ENCODE measurements at regions of chr1 and their contacts with region 1.

Region 1: GRCh38 chr1:233790662-233791375 is 113.7 kb upstream of the SLC35F3 start:
- DNase-seq: peak; percentile 30
- ATAC-seq: peak; percentile 98
- H3K4me3 ChIP-seq: no peak overlapping the region
- H3K27ac ChIP-seq: no peak overlapping the region
- H3K4me1 ChIP-seq: no peaks in the 10 kb centered on the region
- H3K27me3 ChIP-seq: no peaks in the 10 kb centered on the region
- CTCF ChIP-seq: peak; percentile 94 to 97 (median 94); a peak in 5 of 6 replicates
- EP300 ChIP-seq: no peak
- POLR2A ChIP-seq: no peak
- RAD21 ChIP-seq: peak; percentile 97

Region 2: DNA sequence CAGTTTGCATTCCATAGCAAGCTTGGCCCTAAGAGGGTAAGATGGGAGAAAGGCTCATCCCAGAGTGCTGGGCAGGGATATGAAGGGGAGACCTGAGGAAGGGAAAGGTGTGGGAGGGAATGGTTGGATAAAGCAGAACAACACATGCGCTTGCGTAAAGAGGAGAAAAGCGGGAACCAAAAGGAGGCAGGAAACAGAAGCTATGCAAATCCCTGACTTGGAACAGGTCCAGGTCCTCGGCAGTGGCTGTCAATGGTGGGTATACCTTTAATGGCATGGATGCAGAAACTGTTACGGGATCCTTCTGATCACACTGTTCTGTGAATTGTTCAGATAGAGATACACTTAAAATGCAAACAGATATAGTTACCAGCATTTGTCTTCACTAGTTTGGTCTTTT is 1616.5 kb before region 1 on chr1:
- CTCF ChIA-PET with region 1: no interaction called
- POLR2A ChIA-PET with region 1: no interaction called
- RAD21 ChIA-PET with region 1: no interaction called
- SMC1A ChIA-PET with region 1: no interaction called
- in situ Hi-C with region 1: no loop called
- intact Hi-C with region 1: no loop called
- DNase-seq: no peak
- ATAC-seq: no peak
- H3K4me3 ChIP-seq: no peak overlapping the region
- H3K27ac ChIP-seq: no peak overlapping the region
- H3K4me1 ChIP-seq: no peaks in the 10 kb centered on the region
- H3K27me3 ChIP-seq: no peaks in the 10 kb centered on the region
- CTCF ChIP-seq: no peak
- EP300 ChIP-seq: no peak
- POLR2A ChIP-seq: no peak
- RAD21 ChIP-seq: no peak

Region 3: DNA sequence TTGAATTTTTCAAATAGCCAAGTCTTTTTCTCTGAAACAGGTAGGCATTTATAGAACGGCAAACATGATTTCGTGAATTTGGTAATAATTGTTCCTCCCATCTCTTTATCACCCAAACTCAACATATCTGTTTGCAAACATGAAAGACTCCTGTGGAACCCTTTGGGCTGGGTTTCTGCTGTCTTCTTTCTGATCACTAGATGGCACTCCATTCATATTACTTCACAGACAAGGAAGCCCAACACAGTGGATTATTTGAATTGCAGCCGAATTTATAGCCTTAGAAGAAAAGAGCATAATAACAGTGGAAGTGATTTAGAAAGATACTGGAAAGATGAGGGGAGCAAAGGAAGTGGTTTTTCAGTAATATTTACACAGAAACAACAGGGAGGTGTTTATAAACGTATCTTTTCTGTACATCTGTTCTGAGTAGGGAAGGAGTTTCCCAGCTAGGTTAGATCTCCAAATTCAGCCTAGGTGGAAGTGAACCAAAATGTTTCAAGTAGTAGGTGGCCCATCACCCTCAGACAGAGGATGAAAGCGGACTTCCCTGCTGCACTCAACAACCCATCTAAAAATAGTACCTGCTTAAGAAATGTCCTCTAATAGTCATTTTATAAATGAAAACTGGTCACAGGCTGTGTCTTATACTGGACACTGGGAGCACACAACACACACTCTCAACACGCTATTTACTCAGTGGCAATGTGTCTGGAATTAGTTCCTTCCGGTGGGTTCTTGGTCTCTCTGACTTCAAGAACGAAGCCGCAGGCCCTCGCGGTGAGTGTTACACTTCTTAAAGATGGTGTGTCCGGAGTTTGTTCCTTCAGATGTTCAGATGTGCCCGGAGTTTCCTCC is 395.7 kb before region 1 on chr1:
- CTCF ChIA-PET with region 1: interaction called, 3 read pairs
- POLR2A ChIA-PET with region 1: no interaction called
- RAD21 ChIA-PET with region 1: no interaction called
- SMC1A ChIA-PET with region 1: interaction called, 3 read pairs
- in situ Hi-C with region 1: no loop called
- intact Hi-C with region 1: loop called (anchors 1 kb)
- DNase-seq: no peak
- ATAC-seq: peak; percentile 96
- H3K4me3 ChIP-seq: no peak overlapping the region
- H3K27ac ChIP-seq: no peak overlapping the region
- H3K4me1 ChIP-seq: no peaks in the 10 kb centered on the region
- H3K27me3 ChIP-seq: no peaks in the 10 kb centered on the region; a peak in 1 of 4 replicates
- CTCF ChIP-seq: peak; percentile 76 to 89 (median 77)
- EP300 ChIP-seq: no peak
- POLR2A ChIP-seq: no peak
- RAD21 ChIP-seq: peak; percentile 98

Region 4: DNA sequence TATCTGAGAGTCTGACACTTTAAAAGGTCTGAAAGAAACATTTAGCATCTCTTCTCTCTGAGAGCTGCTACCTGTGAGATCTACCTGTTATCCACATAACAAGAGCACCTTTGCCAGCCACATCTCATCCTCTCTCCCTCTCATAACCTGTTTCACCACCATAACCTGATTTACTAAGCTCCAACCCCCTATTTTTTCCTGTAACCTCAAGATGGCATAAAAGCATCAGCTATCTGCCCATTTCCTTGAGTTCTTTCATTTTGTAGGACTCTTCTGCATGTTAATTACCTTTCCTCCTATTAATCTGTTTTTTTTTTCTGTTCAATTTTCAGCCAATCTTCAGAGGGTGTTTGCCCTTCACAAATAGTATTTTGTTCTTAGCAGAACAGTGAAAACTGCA is 313.5 kb before region 1 on chr1:
- CTCF ChIA-PET with region 1: interaction called, 8 read pairs
- POLR2A ChIA-PET with region 1: no interaction called
- RAD21 ChIA-PET with region 1: interaction called, 12 read pairs
- SMC1A ChIA-PET with region 1: interaction called, 5 read pairs
- in situ Hi-C with region 1: no loop called
- intact Hi-C with region 1: no loop called
- DNase-seq: no peak
- ATAC-seq: no peak
- H3K4me3 ChIP-seq: no peak overlapping the region
- H3K27ac ChIP-seq: no peak overlapping the region
- H3K4me1 ChIP-seq: peaks cover 3% of the 10 kb centered on the region; the same call in 1 of the 2 replicates
- H3K27me3 ChIP-seq: no peaks in the 10 kb centered on the region
- CTCF ChIP-seq: peak in 1 of 3 experiments; percentile 31; a peak in 2 of 6 replicates
- EP300 ChIP-seq: no peak
- POLR2A ChIP-seq: no peak
- RAD21 ChIP-seq: peak; percentile 52

Region 5: GRCh38 chr1:233518349-233518748 is 272.5 kb before region 1 on chr1:
- CTCF ChIA-PET with region 1: interaction called, 25 read pairs
- POLR2A ChIA-PET with region 1: no interaction called
- RAD21 ChIA-PET with region 1: interaction called, 18 read pairs
- SMC1A ChIA-PET with region 1: interaction called, 6 read pairs
- in situ Hi-C with region 1: no loop called
- intact Hi-C with region 1: loop called (anchors 1 kb)
- DNase-seq: no peak
- ATAC-seq: peak; percentile 76
- H3K4me3 ChIP-seq: no peak overlapping the region
- H3K27ac ChIP-seq: no peak overlapping the region
- H3K4me1 ChIP-seq: no peaks in the 10 kb centered on the region
- H3K27me3 ChIP-seq: no peaks in the 10 kb centered on the region
- CTCF ChIP-seq: peak; percentile 32 to 64 (median 50)
- EP300 ChIP-seq: no peak
- POLR2A ChIP-seq: no peak
- RAD21 ChIP-seq: peak; percentile 67

Region 6: GRCh38 chr1:233598891-233599541 is 191.8 kb before region 1 on chr1:
- CTCF ChIA-PET with region 1: interaction called, 3 read pairs
- POLR2A ChIA-PET with region 1: no interaction called
- RAD21 ChIA-PET with region 1: interaction called, 4 read pairs
- SMC1A ChIA-PET with region 1: interaction called, 4 read pairs
- in situ Hi-C with region 1: no loop called
- intact Hi-C with region 1: loop called (anchors 2 kb)
- DNase-seq: peak; percentile 76
- ATAC-seq: peak; percentile 82
- H3K4me3 ChIP-seq: peak overlapping the region; percentile 33; the same call in 1 of the 2 replicates
- H3K27ac ChIP-seq: peak overlapping the region; percentile 96
- H3K4me1 ChIP-seq: peaks cover 30% of the 10 kb centered on the region
- H3K27me3 ChIP-seq: no peaks in the 10 kb centered on the region
- CTCF ChIP-seq: no peak
- EP300 ChIP-seq: peak; percentile 94 to 98
- POLR2A ChIP-seq: no peak
- RAD21 ChIP-seq: no peak

Region 7: GRCh38 chr1:233613252-233614174 is 177.3 kb before region 1 on chr1 and contains the start of gene KCNK1:
- CTCF ChIA-PET with region 1: no interaction called
- POLR2A ChIA-PET with region 1: no interaction called
- RAD21 ChIA-PET with region 1: no interaction called
- SMC1A ChIA-PET with region 1: no interaction called
- in situ Hi-C with region 1: no loop called
- intact Hi-C with region 1: loop called (anchors 5 kb)
- DNase-seq: no peak
- ATAC-seq: peak; percentile 51
- H3K4me3 ChIP-seq: peak within 1 kb of the TSS; percentile 81
- H3K27ac ChIP-seq: peak within 1 kb of the TSS; percentile 76
- H3K4me1 ChIP-seq: peaks cover 9% of the 10 kb centered on the region
- H3K27me3 ChIP-seq: no peaks in the 10 kb centered on the region
- CTCF ChIP-seq: no peak
- EP300 ChIP-seq: no peak
- POLR2A ChIP-seq: no peak
- RAD21 ChIP-seq: no peak
- polyA plus RNA-seq, gene KCNK1: 9.4 to 14.6 TPM

Region 8: GRCh38 chr1:234065794-234066447 is 275.1 kb after region 1 on chr1:
- CTCF ChIA-PET with region 1: interaction called, 6 read pairs
- POLR2A ChIA-PET with region 1: no interaction called
- RAD21 ChIA-PET with region 1: interaction called, 5 read pairs
- SMC1A ChIA-PET with region 1: interaction called, 8 read pairs
- in situ Hi-C with region 1: no loop called
- intact Hi-C with region 1: loop called (anchors 5 kb)
- DNase-seq: peak; percentile 7
- ATAC-seq: peak; percentile 94
- H3K4me3 ChIP-seq: no peak overlapping the region
- H3K27ac ChIP-seq: no peak overlapping the region
- H3K4me1 ChIP-seq: no peaks in the 10 kb centered on the region
- H3K27me3 ChIP-seq: no peaks in the 10 kb centered on the region
- CTCF ChIP-seq: peak; percentile 71 to 78 (median 76)
- EP300 ChIP-seq: no peak
- POLR2A ChIP-seq: no peak
- RAD21 ChIP-seq: peak; percentile 82

Region 9: DNA sequence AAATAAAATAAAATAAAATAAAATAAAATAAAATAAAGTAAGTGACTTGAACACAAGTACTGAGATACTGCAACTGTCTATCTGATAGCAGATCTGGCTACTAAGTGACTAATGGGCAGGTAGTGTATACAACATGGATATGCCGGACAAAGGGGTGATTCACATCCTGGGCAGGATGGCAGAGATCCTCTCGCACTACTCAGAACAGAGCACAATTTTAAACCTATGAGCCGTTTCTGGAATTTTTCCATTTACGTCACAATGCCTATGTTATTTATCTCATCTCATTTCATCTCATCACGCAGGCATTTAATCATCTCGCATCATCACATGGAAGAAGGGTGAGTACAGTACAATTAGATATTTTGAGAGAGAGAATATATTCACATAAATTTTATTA is 349.1 kb after region 1 on chr1:
- CTCF ChIA-PET with region 1: no interaction called
- POLR2A ChIA-PET with region 1: no interaction called
- RAD21 ChIA-PET with region 1: no interaction called
- SMC1A ChIA-PET with region 1: no interaction called
- in situ Hi-C with region 1: no loop called
- intact Hi-C with region 1: no loop called
- DNase-seq: no peak
- ATAC-seq: no peak
- H3K4me3 ChIP-seq: no peak overlapping the region
- H3K27ac ChIP-seq: no peak overlapping the region
- H3K4me1 ChIP-seq: no peaks in the 10 kb centered on the region
- H3K27me3 ChIP-seq: no peaks in the 10 kb centered on the region
- CTCF ChIP-seq: no peak
- EP300 ChIP-seq: no peak
- POLR2A ChIP-seq: no peak
- RAD21 ChIP-seq: no peak

Region 10: GRCh38 chr1:234348964-234349363 is 558.1 kb after region 1 on chr1:
- CTCF ChIA-PET with region 1: no interaction called
- POLR2A ChIA-PET with region 1: no interaction called
- RAD21 ChIA-PET with region 1: no interaction called
- SMC1A ChIA-PET with region 1: no interaction called
- in situ Hi-C with region 1: no loop called
- intact Hi-C with region 1: no loop called
- DNase-seq: no peak
- ATAC-seq: no peak
- H3K4me3 ChIP-seq: no peak overlapping the region
- H3K27ac ChIP-seq: no peak overlapping the region
- H3K4me1 ChIP-seq: no peaks in the 10 kb centered on the region
- H3K27me3 ChIP-seq: peaks cover 0 to 4% of the 10 kb centered on the region in 2 experiments; a peak in 1 of 4 replicates
- CTCF ChIP-seq: no peak
- EP300 ChIP-seq: no peak
- POLR2A ChIP-seq: no peak
- RAD21 ChIP-seq: no peak

Measured in GM12878 (cell line).